ENCODE measurements at regions of chr10 and their contacts with region 1.

Region 1: DNA sequence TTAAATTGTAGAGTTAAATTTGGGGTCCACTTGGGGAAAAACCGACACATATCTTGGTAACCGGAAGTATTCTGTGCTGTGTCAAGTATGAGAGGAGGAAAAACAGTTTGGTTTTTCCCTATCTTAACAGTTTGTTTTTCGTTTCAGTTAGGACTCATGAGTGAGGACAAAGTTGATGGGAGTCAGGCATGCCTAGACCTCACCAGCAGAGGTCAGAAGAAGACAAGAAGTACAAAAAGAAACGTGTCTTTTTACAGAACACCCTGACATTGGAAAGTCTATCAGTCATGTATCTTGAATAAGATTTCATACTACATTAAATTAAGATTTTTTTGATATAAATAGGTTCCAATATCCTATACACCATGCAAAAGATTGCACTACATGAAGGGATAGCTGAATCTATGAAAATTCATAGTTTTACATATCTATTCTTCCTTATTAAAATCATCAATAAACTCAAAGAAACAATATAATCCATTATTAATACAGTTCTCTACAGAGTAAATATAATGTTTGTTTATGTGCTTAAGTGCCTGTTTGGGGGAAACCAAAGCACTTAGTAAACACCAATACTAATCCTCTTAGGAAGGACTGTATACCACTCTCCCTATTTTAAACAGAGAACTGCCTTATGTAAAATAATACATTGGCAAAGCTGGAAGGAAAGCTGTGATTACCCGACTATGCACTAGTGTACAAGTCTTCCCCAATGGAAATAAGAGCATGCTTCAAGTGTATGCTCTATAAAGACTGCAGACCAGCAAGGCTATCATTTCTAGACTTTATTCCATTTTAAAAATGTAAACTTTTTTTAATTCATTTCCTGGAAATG is 95.6 kb downstream of the USP6NL start:
- DNase-seq: peak; percentile 68
- ATAC-seq: peak; percentile 83
- H3K4me3 Mint-ChIP-seq: no peak overlapping the region
- H3K27ac Mint-ChIP-seq: no peak overlapping the region
- H3K4me1 Mint-ChIP-seq: peaks cover 13% of the 10 kb centered on the region
- H3K27me3 Mint-ChIP-seq: peaks cover 10% of the 10 kb centered on the region

Region 2: GRCh38 chr10:11505639-11506038 is 10.2 kb before region 1 on chr10:
- CTCF ChIA-PET with region 1: interaction called, 11 read pairs
- DNase-seq: no peak
- ATAC-seq: no peak
- H3K4me3 Mint-ChIP-seq: no peak overlapping the region
- H3K27ac Mint-ChIP-seq: no peak overlapping the region
- H3K4me1 Mint-ChIP-seq: peaks cover 6% of the 10 kb centered on the region
- H3K27me3 Mint-ChIP-seq: peaks cover 11% of the 10 kb centered on the region

Region 3: DNA sequence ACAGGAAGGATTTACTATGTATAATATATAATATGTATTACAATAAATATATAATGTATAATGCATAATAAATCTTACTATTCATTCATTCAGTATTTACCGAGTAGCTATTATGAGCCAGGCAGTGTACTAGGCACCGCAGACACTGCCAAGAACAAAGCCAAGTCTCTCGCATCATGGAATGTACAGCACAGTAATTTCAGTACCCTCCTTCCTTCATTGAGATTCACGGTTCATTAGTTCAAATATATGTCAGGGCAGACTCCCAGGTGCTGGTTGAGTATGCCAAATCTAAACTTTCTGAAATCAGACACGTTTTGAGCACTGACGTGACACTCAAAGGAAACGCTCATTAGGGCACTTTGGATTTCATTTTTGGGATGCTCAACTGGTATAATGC is 86.5 kb after region 1 on chr10:
- CTCF ChIA-PET with region 1: no interaction called
- DNase-seq: no peak
- ATAC-seq: no peak
- H3K4me3 Mint-ChIP-seq: no peak overlapping the region
- H3K27ac Mint-ChIP-seq: no peak overlapping the region
- H3K4me1 Mint-ChIP-seq: peaks cover 15% of the 10 kb centered on the region
- H3K27me3 Mint-ChIP-seq: peaks cover 5% of the 10 kb centered on the region

Region 4: GRCh38 chr10:11724938-11725776 is 209.3 kb after region 1 on chr10:
- CTCF ChIA-PET with region 1: interaction called, 14 read pairs
- DNase-seq: no peak
- ATAC-seq: peak; percentile 51
- H3K4me3 Mint-ChIP-seq: no peak overlapping the region
- H3K27ac Mint-ChIP-seq: no peak overlapping the region
- H3K4me1 Mint-ChIP-seq: peaks cover 1% of the 10 kb centered on the region
- H3K27me3 Mint-ChIP-seq: peaks cover 41% of the 10 kb centered on the region

Region 5: GRCh38 chr10:11757821-11758463 is 242.1 kb after region 1 on chr10:
- CTCF ChIA-PET with region 1: interaction called, 69 read pairs
- DNase-seq: peak; percentile 91
- ATAC-seq: peak; percentile 98
- H3K4me3 Mint-ChIP-seq: no peak overlapping the region
- H3K27ac Mint-ChIP-seq: no peak overlapping the region
- H3K4me1 Mint-ChIP-seq: no peaks in the 10 kb centered on the region
- H3K27me3 Mint-ChIP-seq: peaks cover 7% of the 10 kb centered on the region

Measured in activated CD8-positive, alpha-beta memory T cell treated with anti-CD3 and anti-CD28 coated beads, Interleukin-2, amount 10 ng/mL, durations not matched to agents 7 days and 5 days (primary cell).